B cell (primary cell): ENCODE measurements at regions of chr11 and their contacts with region 1.

Region 1: GRCh38 chr11:114180301-114181055 is 115.7 kb upstream of the NNMT start:
- DNase-seq: peak; percentile 59
- ATAC-seq: peak; percentile 59
- H3K4me3 ChIP-seq: no peak overlapping the region
- H3K4me3 Mint-ChIP-seq: peak overlapping the region; percentile 53
- H3K27ac ChIP-seq: peak overlapping the region; percentile 79 to 84
- H3K27ac Mint-ChIP-seq: peak overlapping the region; percentile 62
- H3K4me1 ChIP-seq: peaks cover 62 to 72% of the 10 kb centered on the region in 2 donors
- H3K4me1 Mint-ChIP-seq: peaks cover 69% of the 10 kb centered on the region
- H3K27me3 ChIP-seq: no peaks in the 10 kb centered on the region
- H3K27me3 Mint-ChIP-seq: peaks cover 2% of the 10 kb centered on the region
- CTCF ChIP-seq: peak; percentile 31

Region 2: DNA sequence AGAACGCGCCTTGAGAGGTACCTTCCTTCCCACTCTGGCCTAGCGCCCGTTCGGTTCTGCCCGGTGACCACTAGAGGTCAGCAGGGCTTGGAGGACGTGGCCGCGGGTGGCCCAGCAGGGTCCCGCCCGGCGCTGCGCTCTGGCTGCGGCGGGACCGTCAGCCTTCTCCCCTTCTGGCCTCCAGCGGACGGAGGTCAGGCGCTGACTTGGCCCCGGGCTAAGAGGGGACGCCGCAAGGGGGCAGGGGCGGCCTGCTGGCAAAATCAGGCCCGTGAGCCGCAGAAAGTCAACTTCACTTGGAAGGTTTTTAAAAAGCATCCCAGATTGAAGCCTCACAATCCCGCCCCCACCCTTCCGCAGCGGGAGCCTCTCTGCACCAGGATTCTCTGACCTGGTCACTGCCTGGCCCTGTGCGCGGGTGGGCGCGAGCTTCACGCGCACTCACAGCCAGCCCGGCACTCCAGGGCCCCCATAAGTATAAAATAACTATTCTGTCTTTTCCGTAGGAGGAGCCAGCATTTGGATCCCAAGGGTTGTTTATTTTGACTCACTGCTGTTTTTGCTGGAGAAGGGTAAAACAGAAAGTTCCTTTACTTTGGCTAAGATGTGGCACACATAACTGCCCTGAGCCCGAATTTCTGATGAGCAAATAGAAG is 144.2 kb before region 1 on chr11:
- CTCF ChIA-PET with region 1: interaction called, 44 read pairs
- POLR2A ChIA-PET with region 1: no interaction called
- intact Hi-C with region 1: loop called (anchors 1 kb)
- DNase-seq: peak; percentile 72
- ATAC-seq: peak; percentile 93
- H3K4me3 ChIP-seq: peak overlapping the region in 3 of 5 experiments; percentile 18 to 48 (median 22)
- H3K4me3 Mint-ChIP-seq: no peak overlapping the region
- H3K27ac ChIP-seq: no peak overlapping the region
- H3K27ac Mint-ChIP-seq: no peak overlapping the region
- H3K4me1 ChIP-seq: peaks cover 0 to 12% of the 10 kb centered on the region in 2 donors
- H3K4me1 Mint-ChIP-seq: peaks cover 7% of the 10 kb centered on the region
- H3K27me3 ChIP-seq: peaks cover 0 to 17% (median 4%) of the 10 kb centered on the region in 4 experiments
- H3K27me3 Mint-ChIP-seq: peaks cover 28% of the 10 kb centered on the region
- CTCF ChIP-seq: peak; percentile 69

Region 3: GRCh38 chr11:114192841-114193389 is 12.4 kb after region 1 on chr11:
- CTCF ChIA-PET with region 1: interaction called, 12 read pairs
- POLR2A ChIA-PET with region 1: interaction called, 3 read pairs
- intact Hi-C with region 1: no loop called
- DNase-seq: no peak
- ATAC-seq: no peak
- H3K4me3 ChIP-seq: no peak overlapping the region
- H3K4me3 Mint-ChIP-seq: no peak overlapping the region
- H3K27ac ChIP-seq: no peak overlapping the region
- H3K27ac Mint-ChIP-seq: no peak overlapping the region
- H3K4me1 ChIP-seq: peaks cover 42 to 66% of the 10 kb centered on the region in 2 donors
- H3K4me1 Mint-ChIP-seq: peaks cover 60% of the 10 kb centered on the region
- H3K27me3 ChIP-seq: no peaks in the 10 kb centered on the region
- H3K27me3 Mint-ChIP-seq: no peaks in the 10 kb centered on the region
- CTCF ChIP-seq: no peak

Region 4: GRCh38 chr11:115126515-115127208 is 946.2 kb after region 1 on chr11:
- CTCF ChIA-PET with region 1: no interaction called
- POLR2A ChIA-PET with region 1: no interaction called
- intact Hi-C with region 1: no loop called
- DNase-seq: peak; percentile 11
- ATAC-seq: peak; percentile 47
- H3K4me3 ChIP-seq: no peak overlapping the region
- H3K4me3 Mint-ChIP-seq: no peak overlapping the region
- H3K27ac ChIP-seq: no peak overlapping the region
- H3K27ac Mint-ChIP-seq: no peak overlapping the region
- H3K4me1 ChIP-seq: no peaks in the 10 kb centered on the region
- H3K4me1 Mint-ChIP-seq: peaks cover 3% of the 10 kb centered on the region
- H3K27me3 ChIP-seq: peaks cover 0 to 2% (median 0%) of the 10 kb centered on the region in 4 experiments
- H3K27me3 Mint-ChIP-seq: no peaks in the 10 kb centered on the region
- CTCF ChIP-seq: no peak